Heart right ventricle (tissue), 16 donors: ENCODE measurements at regions of chr4 and their contacts with region 1.

Region 1: GRCh38 chr4:99875072-99875471 is 19.2 kb downstream of the LAMTOR3 start:
- DNase-seq: no peak
- ATAC-seq: no peak
- H3K4me3 ChIP-seq: no peak overlapping the region
- H3K27ac ChIP-seq: no peak overlapping the region
- H3K4me1 ChIP-seq: no peaks in the 10 kb centered on the region
- H3K27me3 ChIP-seq: no peaks in the 10 kb centered on the region
- CTCF ChIP-seq: no peak

Region 2: GRCh38 chr4:99552872-99553271 is 322.2 kb before region 1 on chr4:
- intact Hi-C with region 1: loop called in 1 of 10 experiments (anchors 10 kb)
- DNase-seq: no peak
- ATAC-seq: no peak
- H3K4me3 ChIP-seq: no peak overlapping the region
- H3K27ac ChIP-seq: no peak overlapping the region
- H3K4me1 ChIP-seq: no peaks in the 10 kb centered on the region
- H3K27me3 ChIP-seq: no peaks in the 10 kb centered on the region
- CTCF ChIP-seq: no peak

Region 3: DNA sequence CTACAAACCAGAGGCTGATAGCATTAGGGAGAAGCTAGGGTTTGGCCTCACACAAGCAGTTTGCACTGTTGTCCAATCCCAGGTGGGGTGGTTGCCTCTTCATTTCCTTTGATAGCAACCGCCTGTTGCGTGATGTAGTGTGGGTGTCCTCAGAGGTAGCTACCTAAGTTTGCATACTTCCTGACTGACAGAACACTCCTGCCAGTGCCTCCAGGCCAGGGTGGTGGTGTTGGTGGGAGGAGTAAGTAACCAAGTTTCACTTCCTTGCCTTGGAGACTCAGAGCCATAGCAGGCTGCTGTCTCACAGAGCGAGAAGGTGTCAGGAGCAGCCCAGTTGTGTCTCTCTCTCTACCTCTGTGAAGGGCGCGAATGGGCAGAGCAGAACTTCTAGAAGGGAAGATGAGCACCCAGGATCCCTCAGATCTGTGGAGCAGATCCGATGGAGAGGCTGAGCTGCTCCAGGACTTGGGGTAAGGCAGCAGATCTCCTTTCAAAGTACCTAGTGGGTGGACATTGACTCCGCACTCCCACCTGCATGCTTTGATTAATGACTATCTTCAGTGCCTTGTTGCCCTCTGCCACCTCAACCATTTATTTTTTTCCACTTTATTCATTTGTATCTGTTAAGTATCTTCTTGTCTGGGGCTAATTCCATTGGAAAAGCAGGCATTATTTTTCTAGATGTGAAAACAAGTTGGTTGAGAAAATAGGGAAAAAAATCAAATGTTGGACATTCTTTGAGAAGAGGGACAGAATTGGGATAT is 58.3 kb before region 1 on chr4 and contains the start of gene DAPP1:
- intact Hi-C with region 1: loop called in 4 of 10 experiments (anchors 5 to 10 kb)
- DNase-seq: peak; percentile 13
- ATAC-seq: peak; percentile 47 to 66 (median 60)
- H3K4me3 ChIP-seq: peak within 1 kb of the TSS in 7 of 10 donors; percentile 2 to 61 (median 29)
- H3K27ac ChIP-seq: peak within 1 kb of the TSS in 4 of 10 donors; percentile 7 to 93 (median 16)
- H3K4me1 ChIP-seq: peaks cover 0 to 62% (median 0%) of the 10 kb centered on the region in 9 donors
- H3K27me3 ChIP-seq: no peaks in the 10 kb centered on the region
- CTCF ChIP-seq: no peak
- total RNA-seq, gene DAPP1: 0.16 to 5.4 (median 0.72) TPM in 9 of 10 donors, not detected in the other